ENCODE measurements at regions of chr6 and their contacts with region 1.

Region 1: DNA sequence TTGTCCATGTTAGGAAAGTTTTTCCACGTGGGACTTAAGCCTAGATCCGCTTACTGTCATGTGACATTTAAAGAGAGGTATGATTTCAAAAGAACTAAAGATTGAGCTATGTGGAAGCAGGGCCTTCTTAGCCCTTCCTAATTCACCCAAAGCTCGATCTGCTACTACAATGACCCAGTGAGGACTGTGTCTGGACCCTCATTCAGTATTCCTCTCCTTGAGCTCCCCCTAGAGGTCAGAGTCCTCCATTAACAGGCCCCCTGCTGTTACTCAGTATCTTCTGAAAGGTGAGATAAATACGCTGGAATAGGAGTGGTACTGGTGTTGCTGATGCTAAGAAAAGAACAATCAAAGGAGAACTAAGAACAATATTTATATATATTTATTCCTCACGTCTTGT is 414.0 kb downstream of the GJA1 start:
- DNase-seq: peak; percentile 85
- ATAC-seq: peak; percentile 77
- H3K4me3 Mint-ChIP-seq: no peak overlapping the region
- H3K27ac Mint-ChIP-seq: no peak overlapping the region
- H3K4me1 Mint-ChIP-seq: peaks cover 56% of the 10 kb centered on the region
- H3K27me3 Mint-ChIP-seq: no peaks in the 10 kb centered on the region
- CTCF ChIP-seq: peak; percentile 77; the same call in 1 of the 2 replicates

Region 2: DNA sequence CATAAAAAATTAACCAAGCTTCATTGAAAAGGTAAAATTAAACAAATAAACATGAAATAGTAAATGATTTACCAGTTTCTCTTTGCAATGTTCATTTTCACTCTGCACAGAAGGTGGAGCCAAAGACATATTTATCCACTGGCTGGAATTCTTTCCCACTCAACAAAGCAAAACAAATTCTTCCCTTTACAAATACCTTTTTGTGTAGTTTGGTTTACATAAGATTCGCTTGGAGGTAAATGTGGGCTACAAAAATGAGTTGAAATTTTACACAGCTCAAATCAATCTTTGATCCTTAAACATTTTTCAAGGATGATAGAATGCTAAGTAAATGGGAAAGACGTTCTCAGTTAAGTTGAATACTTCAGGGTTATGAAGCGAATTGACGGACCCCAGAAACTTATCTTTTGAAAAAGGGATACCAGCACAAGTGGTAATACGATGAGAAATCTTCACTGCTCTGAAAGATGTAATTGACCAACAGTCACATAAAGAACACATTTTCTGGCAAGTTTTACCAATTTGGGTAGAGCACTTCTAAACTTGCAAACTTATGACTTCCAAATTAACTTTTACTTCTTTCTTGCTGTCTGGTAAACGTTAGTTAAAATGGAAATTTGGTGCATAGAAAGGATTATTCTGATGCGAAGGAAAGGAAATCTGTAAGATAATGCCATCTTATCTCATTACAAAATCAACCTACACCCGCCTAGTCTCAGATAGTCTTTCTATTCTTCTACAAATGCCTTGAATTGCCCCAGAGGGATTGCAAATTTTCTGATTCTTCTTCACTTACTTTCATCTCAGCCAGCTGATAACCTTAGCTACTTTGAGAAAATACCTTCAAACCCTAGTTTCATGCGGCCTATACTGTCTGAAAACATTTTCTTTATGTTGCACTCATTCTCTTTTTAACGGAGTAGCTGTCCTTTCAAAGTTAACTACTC is 418.7 kb before region 1 on chr6:
- CTCF ChIA-PET with region 1: interaction called, 11 read pairs
- POLR2A ChIA-PET with region 1: interaction called, 6 read pairs
- DNase-seq: no peak
- ATAC-seq: peak; percentile 61
- H3K4me3 Mint-ChIP-seq: peak overlapping the region; percentile 51
- H3K27ac Mint-ChIP-seq: peak overlapping the region; percentile 94
- H3K4me1 Mint-ChIP-seq: peaks cover 54% of the 10 kb centered on the region
- H3K27me3 Mint-ChIP-seq: no peaks in the 10 kb centered on the region
- CTCF ChIP-seq: 0 out of 2 replicates have a peak, but pooled peaks have one; percentile 31

Region 3: GRCh38 chr6:121436960-121437850 is 412.3 kb before region 1 on chr6:
- CTCF ChIA-PET with region 1: interaction called, 11 read pairs
- POLR2A ChIA-PET with region 1: interaction called, 8 read pairs
- DNase-seq: peak; percentile 54
- ATAC-seq: peak; percentile 29
- H3K4me3 Mint-ChIP-seq: peak overlapping the region; percentile 91
- H3K27ac Mint-ChIP-seq: peak overlapping the region; percentile 98
- H3K4me1 Mint-ChIP-seq: peaks cover 58% of the 10 kb centered on the region
- H3K27me3 Mint-ChIP-seq: no peaks in the 10 kb centered on the region; the same call in 1 of the 2 replicates
- CTCF ChIP-seq: no peak

Region 4: DNA sequence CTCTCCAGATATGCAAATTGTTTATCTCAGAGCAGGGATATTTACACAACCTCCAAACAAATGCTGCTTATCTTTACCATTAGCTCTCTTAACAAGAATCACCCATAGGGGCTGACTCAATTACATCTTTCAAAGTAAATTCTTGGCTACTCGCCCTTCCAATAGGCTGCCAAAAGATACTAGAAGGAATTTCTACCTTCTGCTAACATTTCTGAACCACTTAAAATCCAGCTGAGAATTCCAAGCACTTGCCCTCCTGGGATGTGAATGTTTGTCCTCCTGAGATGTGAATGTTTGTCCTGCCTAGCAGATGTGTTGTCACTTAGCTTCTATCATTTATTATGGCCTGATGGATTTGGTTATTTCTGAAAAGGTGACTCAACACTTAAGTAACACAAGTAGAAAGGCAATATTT is 26.0 kb before region 1 on chr6:
- CTCF ChIA-PET with region 1: interaction called, 13 read pairs
- POLR2A ChIA-PET with region 1: no interaction called
- DNase-seq: no peak
- ATAC-seq: peak; percentile 94
- H3K4me3 Mint-ChIP-seq: 0 out of 2 replicates have a peak overlapping the region, but pooled peaks have one; percentile 11
- H3K27ac Mint-ChIP-seq: peak overlapping the region; percentile 93
- H3K4me1 Mint-ChIP-seq: peaks cover 44% of the 10 kb centered on the region
- H3K27me3 Mint-ChIP-seq: no peaks in the 10 kb centered on the region; the same call in 1 of the 2 replicates
- CTCF ChIP-seq: no peak

Region 5: DNA sequence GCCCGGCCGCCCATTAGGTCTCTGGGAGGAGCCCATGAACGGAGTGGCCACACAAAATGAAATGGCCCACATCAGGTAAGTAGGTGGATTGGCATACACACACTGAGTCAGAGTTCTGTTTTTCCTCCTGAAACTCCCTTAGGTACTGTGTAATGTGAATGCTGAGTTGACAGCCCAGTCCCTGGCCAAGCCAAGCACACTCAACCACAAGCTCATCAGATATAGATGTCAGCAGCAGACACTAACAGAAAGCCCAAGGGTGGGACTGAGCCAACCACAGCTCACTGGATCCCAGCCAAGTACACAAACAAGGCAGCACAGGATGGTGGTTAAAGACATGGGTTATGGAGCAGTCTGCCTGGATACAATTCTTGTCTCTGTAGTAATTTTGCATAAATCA is 10.6 kb before region 1 on chr6:
- CTCF ChIA-PET with region 1: no interaction called
- POLR2A ChIA-PET with region 1: no interaction called
- DNase-seq: no peak
- ATAC-seq: no peak
- H3K4me3 Mint-ChIP-seq: no peak overlapping the region
- H3K27ac Mint-ChIP-seq: no peak overlapping the region
- H3K4me1 Mint-ChIP-seq: no peaks in the 10 kb centered on the region
- H3K27me3 Mint-ChIP-seq: no peaks in the 10 kb centered on the region
- CTCF ChIP-seq: no peak

Region 6: GRCh38 chr6:121912905-121913304 is 63.4 kb after region 1 on chr6:
- CTCF ChIA-PET with region 1: no interaction called
- POLR2A ChIA-PET with region 1: no interaction called
- DNase-seq: no peak
- ATAC-seq: no peak
- H3K4me3 Mint-ChIP-seq: no peak overlapping the region
- H3K27ac Mint-ChIP-seq: no peak overlapping the region
- H3K4me1 Mint-ChIP-seq: no peaks in the 10 kb centered on the region
- H3K27me3 Mint-ChIP-seq: no peaks in the 10 kb centered on the region
- CTCF ChIP-seq: no peak

Measured in WTC11 (cell line).